Ovary (tissue), 10 donors: ENCODE measurements at regions of chr9 and their contacts with region 1.

Region 1: GRCh38 chr9:36862206-36863145 is 171.6 kb downstream of the PAX5 start:
- DNase-seq: peak in 3 of 5 donors; percentile 23 to 43 (median 28)
- H3K4me3 ChIP-seq: no peak overlapping the region
- H3K27ac ChIP-seq: no peak overlapping the region
- H3K4me1 ChIP-seq: no peaks in the 10 kb centered on the region
- H3K27me3 ChIP-seq: no peaks in the 10 kb centered on the region
- CTCF ChIP-seq: no peak
- EP300 ChIP-seq: no peak
- POLR2A ChIP-seq: no peak

Region 2: DNA sequence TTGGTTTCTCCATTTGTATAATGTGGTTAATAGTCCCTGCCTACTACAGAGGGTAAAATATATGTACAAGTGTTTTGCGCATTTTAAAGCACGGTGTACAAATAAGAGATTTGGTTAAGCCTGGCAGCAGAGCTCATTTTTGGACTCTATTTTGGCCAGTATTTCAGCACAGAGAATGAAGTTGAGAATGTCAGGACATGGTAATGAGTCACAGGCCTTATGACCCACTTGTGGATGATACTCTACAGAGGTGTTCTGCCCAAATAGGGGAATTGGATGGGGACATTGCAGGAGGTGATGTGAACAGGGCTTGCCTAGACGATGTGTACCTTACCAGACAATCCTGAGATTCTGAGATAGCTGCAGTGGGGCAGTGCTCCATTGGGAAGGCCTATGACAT is 239.2 kb before region 1 on chr9:
- intact Hi-C with region 1: no loop called
- DNase-seq: no peak
- H3K4me3 ChIP-seq: no peak overlapping the region
- H3K27ac ChIP-seq: peak overlapping the region in 1 of 2 donors; percentile 0
- H3K4me1 ChIP-seq: peaks cover 3% of the 10 kb centered on the region
- H3K27me3 ChIP-seq: no peaks in the 10 kb centered on the region
- CTCF ChIP-seq: no peak
- EP300 ChIP-seq: no peak
- POLR2A ChIP-seq: no peak

Region 3: DNA sequence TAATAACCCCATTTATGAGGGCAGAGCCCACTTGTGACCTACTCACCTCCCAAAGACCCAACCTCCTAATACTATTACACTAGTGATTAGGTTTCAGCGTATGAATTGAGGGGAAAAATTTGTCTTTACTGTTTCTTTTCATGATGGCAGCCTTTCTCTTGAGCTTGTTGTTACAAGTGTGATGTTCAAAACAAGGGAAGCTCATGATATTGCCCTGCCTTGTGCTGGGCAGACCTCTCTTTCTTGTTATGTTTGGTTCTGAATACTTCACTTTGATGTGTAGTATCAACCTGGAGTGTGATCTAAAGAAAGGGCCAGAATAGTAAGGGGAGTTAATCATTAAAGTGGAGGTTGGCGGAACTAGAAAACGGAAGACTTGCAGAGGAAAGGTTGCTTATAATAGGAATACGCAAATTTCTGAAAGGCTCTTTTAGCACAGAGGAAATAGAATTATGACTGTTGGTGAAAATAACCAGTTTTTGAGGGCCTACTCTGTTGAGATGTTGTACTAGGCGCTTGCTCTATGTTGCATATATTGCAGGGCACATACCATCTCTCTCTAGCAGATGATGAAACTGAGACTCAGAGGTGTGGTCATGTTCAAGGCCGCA is 221.6 kb before region 1 on chr9:
- intact Hi-C with region 1: loop called in 1 of 4 experiments (anchors 10 kb)
- DNase-seq: no peak
- H3K4me3 ChIP-seq: no peak overlapping the region
- H3K27ac ChIP-seq: no peak overlapping the region
- H3K4me1 ChIP-seq: no peaks in the 10 kb centered on the region
- H3K27me3 ChIP-seq: no peaks in the 10 kb centered on the region
- CTCF ChIP-seq: no peak
- EP300 ChIP-seq: no peak
- POLR2A ChIP-seq: no peak

Region 4: DNA sequence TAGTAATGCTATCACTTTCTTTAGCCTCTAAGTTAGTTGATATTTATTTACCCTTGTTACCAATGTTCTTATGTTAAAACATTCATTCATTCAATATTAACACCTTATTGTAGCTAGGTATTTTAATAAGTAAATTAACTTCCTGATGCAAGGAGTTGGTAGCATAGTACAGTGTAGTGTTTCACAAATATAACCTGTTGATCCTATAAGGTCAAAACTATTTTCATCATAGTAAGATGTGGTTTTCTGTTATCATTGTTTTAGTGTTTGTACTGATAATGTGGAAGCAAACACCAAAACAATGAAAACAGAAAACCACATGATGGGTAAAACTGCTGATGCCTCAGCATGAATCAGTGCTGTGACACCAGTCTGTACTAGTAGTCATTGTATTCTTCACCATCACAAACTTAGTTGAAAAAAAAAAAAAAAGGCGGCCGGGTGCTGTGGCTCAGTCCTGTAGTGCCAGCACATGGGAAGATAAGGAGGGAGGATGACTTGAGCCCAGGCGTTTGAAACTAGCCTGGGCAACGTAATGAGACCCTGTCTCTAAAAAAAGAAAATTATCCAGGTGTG is 294.4 kb after region 1 on chr9:
- intact Hi-C with region 1: no loop called
- DNase-seq: no peak
- H3K4me3 ChIP-seq: no peak overlapping the region
- H3K27ac ChIP-seq: no peak overlapping the region
- H3K4me1 ChIP-seq: no peaks in the 10 kb centered on the region
- H3K27me3 ChIP-seq: no peaks in the 10 kb centered on the region
- CTCF ChIP-seq: no peak
- EP300 ChIP-seq: no peak
- POLR2A ChIP-seq: no peak

Region 5: DNA sequence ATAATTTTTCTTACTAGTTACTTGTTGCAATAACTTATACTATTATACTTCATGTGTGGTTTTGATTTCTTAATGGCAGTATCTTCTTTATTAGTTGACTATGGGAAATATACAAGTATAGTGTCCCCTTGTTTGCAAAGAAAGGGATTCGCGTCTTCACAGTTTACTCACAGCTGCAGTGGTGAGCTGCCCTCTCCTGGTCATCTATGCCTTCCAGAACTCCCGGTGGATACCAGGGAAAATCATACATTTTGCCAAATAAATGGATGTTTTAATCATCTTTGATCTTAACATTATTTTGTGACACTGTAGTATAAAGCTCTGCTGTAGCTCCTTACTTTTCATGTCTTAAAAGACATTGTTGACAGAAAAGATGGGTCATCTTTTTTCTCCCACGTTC is 399.9 kb after region 1 on chr9:
- intact Hi-C with region 1: loop called in 1 of 4 experiments (anchors 5 kb)
- DNase-seq: no peak
- H3K4me3 ChIP-seq: no peak overlapping the region
- H3K27ac ChIP-seq: no peak overlapping the region
- H3K4me1 ChIP-seq: no peaks in the 10 kb centered on the region
- H3K27me3 ChIP-seq: no peaks in the 10 kb centered on the region
- CTCF ChIP-seq: no peak
- EP300 ChIP-seq: no peak
- POLR2A ChIP-seq: no peak